Activated CD4-positive, alpha-beta T cell treated with anti-CD3 and anti-CD28 coated beads for 36 hours (primary cell): ENCODE measurements at regions of chr9 and their contacts with region 1.

Region 1: DNA sequence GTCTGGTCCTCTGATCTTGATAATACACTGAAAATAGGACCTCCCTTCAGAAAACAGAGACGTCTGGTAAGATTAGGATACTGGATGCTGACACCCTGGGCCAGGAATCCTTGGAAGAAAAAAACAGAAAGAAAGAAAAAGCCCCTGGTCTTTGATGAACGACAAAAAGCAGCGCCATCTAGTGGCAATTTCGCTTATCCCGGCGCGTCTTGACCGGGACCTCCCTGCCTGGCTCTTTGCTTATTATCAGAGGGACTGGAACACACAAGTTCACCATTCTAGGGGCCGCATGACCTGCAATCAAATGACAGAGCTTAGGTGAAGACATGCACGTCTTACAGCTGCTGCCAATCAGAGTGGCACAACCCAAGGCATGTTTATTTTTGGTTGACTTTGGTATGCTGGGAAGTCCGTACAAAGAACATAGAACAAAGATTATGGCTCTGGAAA is 114.9 kb upstream of the NFIB start:
- DNase-seq: peak; percentile 68
- ATAC-seq: no peak
- H3K4me3 Mint-ChIP-seq: no peak overlapping the region
- H3K27ac Mint-ChIP-seq: no peak overlapping the region
- H3K4me1 Mint-ChIP-seq: no peaks in the 10 kb centered on the region
- H3K27me3 Mint-ChIP-seq: peaks cover 11% of the 10 kb centered on the region

Region 2: DNA sequence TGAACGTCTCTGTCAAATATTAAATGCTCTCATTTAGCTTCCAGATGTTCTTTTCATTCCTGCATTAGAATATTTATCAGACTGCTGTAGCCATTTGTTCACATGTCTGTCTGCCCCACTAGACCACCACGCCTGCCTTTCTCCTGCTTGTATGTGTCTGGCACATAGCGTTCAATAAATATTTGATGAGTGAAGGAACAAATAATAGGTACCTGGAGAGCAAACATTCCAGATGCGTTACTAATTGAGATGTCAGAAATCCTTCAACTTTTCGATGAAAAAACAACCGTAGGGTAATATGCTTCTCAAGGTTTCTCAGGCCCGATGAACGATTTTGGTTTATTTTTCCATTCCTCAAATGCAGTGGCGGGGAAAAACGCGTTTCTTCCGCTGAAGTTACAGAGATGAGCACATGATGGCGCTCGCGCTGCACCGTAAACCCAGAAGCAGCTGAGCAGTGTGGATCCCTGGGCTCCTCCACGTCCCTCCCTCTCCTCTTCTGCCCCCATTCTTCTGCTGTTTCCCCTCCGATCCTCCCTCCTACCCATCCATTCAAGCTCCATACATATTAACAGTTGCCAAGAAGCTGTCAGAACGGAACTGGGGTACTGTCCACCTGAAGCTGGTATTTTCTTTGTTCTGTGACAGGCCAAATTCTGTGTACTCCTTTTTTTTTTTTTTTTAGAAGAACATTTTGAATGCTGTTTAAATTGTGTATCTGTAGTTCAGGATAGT is 1394.7 kb before region 1 on chr9:
- CTCF ChIA-PET with region 1: no interaction called
- POLR2A ChIA-PET with region 1: no interaction called
- intact Hi-C with region 1: loop called in 1 of 2 experiments (anchors 10 kb)
- DNase-seq: peak; percentile 39
- ATAC-seq: no peak
- H3K4me3 Mint-ChIP-seq: no peak overlapping the region
- H3K27ac Mint-ChIP-seq: no peak overlapping the region
- H3K4me1 Mint-ChIP-seq: no peaks in the 10 kb centered on the region
- H3K27me3 Mint-ChIP-seq: no peaks in the 10 kb centered on the region

Region 3: DNA sequence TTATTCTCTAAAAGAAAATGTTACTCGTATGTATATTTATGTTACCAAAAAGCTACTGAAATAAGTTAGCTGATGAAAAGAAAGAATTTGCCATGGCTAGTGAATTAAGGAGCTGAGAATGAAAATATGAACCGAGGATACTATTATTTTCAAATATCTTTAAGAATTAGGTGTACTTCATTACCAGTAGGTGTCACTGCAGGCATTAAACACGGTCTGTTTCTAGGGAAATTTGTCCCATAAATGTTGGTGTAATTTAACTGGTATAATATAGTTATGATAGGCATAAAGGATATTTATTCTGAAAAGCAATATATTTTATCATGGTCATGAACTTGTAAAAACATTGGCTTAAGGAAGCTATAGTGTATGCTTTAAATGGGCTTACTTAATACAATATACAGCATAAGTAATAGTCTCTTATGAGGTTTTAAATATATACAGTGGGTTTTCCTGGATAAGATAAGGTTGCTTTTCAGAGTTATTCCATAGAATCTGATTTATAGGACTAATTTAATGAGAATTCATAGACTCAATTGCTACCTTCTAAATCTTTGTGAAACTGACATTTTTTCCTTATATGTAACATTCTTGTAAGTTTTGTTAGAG is 1076.9 kb before region 1 on chr9:
- CTCF ChIA-PET with region 1: no interaction called
- POLR2A ChIA-PET with region 1: no interaction called
- intact Hi-C with region 1: loop called in 1 of 2 experiments (anchors 5 kb)
- DNase-seq: no peak
- ATAC-seq: no peak
- H3K4me3 Mint-ChIP-seq: no peak overlapping the region
- H3K27ac Mint-ChIP-seq: no peak overlapping the region
- H3K4me1 Mint-ChIP-seq: no peaks in the 10 kb centered on the region
- H3K27me3 Mint-ChIP-seq: no peaks in the 10 kb centered on the region

Region 4: GRCh38 chr9:13427587-13427986 is 1001.2 kb before region 1 on chr9:
- CTCF ChIA-PET with region 1: interaction called, 6 read pairs
- POLR2A ChIA-PET with region 1: no interaction called
- intact Hi-C with region 1: loop called (anchors 1 to 10 kb)
- DNase-seq: no peak
- ATAC-seq: no peak
- H3K4me3 Mint-ChIP-seq: no peak overlapping the region
- H3K27ac Mint-ChIP-seq: no peak overlapping the region
- H3K4me1 Mint-ChIP-seq: no peaks in the 10 kb centered on the region
- H3K27me3 Mint-ChIP-seq: no peaks in the 10 kb centered on the region

Region 5: DNA sequence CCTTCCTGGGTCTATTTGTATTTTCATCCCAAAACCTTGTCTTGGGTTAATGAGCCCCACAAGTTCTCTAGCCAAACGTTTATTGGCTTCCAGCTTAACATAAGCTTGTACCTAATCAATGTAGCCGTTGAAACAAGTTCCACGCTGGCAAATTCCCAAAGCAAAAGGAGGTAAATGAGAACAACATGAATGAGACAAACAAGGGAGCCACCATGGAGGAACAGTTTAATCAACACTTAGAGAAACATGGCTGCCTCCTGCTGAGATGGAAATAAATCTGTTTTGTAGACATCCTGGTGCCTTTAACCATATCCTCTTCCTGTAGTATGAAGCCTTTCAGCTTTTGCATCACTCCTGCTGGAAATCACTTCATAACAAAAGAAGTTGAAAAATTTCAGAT is 51.7 kb after region 1 on chr9:
- CTCF ChIA-PET with region 1: no interaction called
- POLR2A ChIA-PET with region 1: no interaction called
- intact Hi-C with region 1: loop called in 1 of 2 experiments (anchors 5 kb)
- DNase-seq: no peak
- ATAC-seq: no peak
- H3K4me3 Mint-ChIP-seq: no peak overlapping the region
- H3K27ac Mint-ChIP-seq: no peak overlapping the region
- H3K4me1 Mint-ChIP-seq: no peaks in the 10 kb centered on the region
- H3K27me3 Mint-ChIP-seq: peaks cover 7% of the 10 kb centered on the region